ENCODE measurements at regions of chrX and their contacts with region 1.

Region 1: GRCh38 chrX:139554376-139554775 is 23.8 kb downstream of the F9 start:
- DNase-seq: no peak
- ATAC-seq: no peak
- H3K4me3 ChIP-seq: no peak overlapping the region
- H3K27ac ChIP-seq: no peak overlapping the region
- H3K4me1 ChIP-seq: no peaks in the 10 kb centered on the region
- H3K27me3 ChIP-seq: peaks cover 5 to 17% of the 10 kb centered on the region in 2 experiments; a peak in 4 of 5 replicates
- CTCF ChIP-seq: no peak
- EP300 ChIP-seq: no peak
- POLR2A ChIP-seq: no peak
- RAD21 ChIP-seq: no peak

Region 2: GRCh38 chrX:138886769-138887168 is 667.6 kb before region 1 on chrX:
- CTCF ChIA-PET with region 1: no interaction called
- POLR2A ChIA-PET with region 1: no interaction called
- in situ Hi-C with region 1: no loop called
- intact Hi-C with region 1: no loop called
- DNase-seq: no peak
- ATAC-seq: no peak
- H3K4me3 ChIP-seq: no peak overlapping the region
- H3K27ac ChIP-seq: no peak overlapping the region
- H3K4me1 ChIP-seq: no peaks in the 10 kb centered on the region
- H3K27me3 ChIP-seq: no peaks in the 10 kb centered on the region
- CTCF ChIP-seq: no peak
- EP300 ChIP-seq: no peak
- POLR2A ChIP-seq: no peak
- RAD21 ChIP-seq: no peak

Region 3: DNA sequence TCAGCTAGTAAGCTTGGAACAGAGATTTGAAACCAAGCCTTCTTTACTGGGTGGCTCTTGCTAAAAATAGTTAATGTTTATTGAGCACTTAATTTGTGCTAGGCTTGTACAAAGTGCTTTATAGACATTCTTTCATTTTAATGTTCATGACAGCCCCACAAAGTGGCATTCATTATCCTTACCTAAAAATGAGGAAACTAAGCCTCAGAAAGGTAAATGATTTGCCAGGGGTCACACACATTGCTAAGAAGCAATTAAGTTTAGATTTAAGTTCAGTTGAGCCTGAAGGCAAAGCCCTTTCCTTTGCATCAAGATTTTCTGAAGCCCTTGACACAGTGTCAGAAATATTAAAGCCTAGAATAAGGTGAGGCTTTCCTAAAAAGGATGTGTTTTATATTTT is 515.3 kb before region 1 on chrX:
- CTCF ChIA-PET with region 1: no interaction called
- POLR2A ChIA-PET with region 1: no interaction called
- in situ Hi-C with region 1: no loop called
- intact Hi-C with region 1: no loop called
- DNase-seq: no peak
- ATAC-seq: no peak
- H3K4me3 ChIP-seq: no peak overlapping the region
- H3K27ac ChIP-seq: no peak overlapping the region
- H3K4me1 ChIP-seq: no peaks in the 10 kb centered on the region
- H3K27me3 ChIP-seq: no peaks in the 10 kb centered on the region
- CTCF ChIP-seq: no peak
- EP300 ChIP-seq: no peak
- POLR2A ChIP-seq: no peak
- RAD21 ChIP-seq: no peak

Region 4: DNA sequence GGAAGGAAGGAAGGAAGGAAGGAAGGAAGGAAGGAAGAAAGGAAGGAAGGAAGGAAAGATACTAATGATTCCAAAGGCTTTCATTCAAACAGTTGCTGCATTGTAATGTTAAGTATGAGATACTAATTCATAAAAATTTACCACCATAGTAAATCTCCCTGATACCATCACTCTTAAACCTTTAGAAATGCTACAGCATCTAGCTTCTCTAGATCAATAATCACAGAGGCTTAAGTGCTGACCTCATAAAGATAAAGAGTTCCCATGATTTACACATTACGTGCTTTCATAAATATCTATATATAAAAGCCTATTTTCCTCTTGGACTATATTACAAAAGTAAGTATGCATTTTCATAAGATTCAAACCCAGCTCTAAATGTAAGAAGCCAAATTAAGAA is 12.6 kb after region 1 on chrX:
- CTCF ChIA-PET with region 1: no interaction called
- POLR2A ChIA-PET with region 1: interaction called, 11 read pairs
- in situ Hi-C with region 1: no loop called
- intact Hi-C with region 1: no loop called
- DNase-seq: no peak
- ATAC-seq: no peak
- H3K4me3 ChIP-seq: no peak overlapping the region
- H3K27ac ChIP-seq: no peak overlapping the region
- H3K4me1 ChIP-seq: no peaks in the 10 kb centered on the region
- H3K27me3 ChIP-seq: no peaks in the 10 kb centered on the region
- CTCF ChIP-seq: no peak
- EP300 ChIP-seq: no peak
- POLR2A ChIP-seq: no peak
- RAD21 ChIP-seq: no peak

Region 5: DNA sequence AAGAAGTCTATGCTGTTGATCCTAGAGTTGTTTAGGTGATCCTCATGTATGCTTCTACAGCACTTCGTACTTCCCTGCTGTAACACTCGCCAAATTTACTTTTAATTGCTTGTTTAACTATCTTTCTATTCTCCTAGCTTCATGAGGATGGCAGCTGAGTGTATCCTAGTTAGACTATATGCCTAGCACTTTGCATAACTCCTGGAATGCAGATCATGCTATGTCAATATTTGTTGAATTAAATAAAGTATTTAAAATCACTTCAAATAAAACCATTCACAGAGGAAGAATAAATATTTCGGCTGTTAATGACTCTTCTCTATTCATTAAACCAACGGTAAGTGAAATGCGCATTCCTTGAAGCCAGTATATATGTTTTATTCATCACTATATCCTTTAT is 31.2 kb after region 1 on chrX:
- CTCF ChIA-PET with region 1: no interaction called
- POLR2A ChIA-PET with region 1: no interaction called
- in situ Hi-C with region 1: no loop called
- intact Hi-C with region 1: no loop called
- DNase-seq: no peak
- ATAC-seq: no peak
- H3K4me3 ChIP-seq: no peak overlapping the region
- H3K27ac ChIP-seq: no peak overlapping the region
- H3K4me1 ChIP-seq: no peaks in the 10 kb centered on the region
- H3K27me3 ChIP-seq: no peaks in the 10 kb centered on the region
- CTCF ChIP-seq: no peak
- EP300 ChIP-seq: no peak
- POLR2A ChIP-seq: no peak
- RAD21 ChIP-seq: no peak

Region 6: DNA sequence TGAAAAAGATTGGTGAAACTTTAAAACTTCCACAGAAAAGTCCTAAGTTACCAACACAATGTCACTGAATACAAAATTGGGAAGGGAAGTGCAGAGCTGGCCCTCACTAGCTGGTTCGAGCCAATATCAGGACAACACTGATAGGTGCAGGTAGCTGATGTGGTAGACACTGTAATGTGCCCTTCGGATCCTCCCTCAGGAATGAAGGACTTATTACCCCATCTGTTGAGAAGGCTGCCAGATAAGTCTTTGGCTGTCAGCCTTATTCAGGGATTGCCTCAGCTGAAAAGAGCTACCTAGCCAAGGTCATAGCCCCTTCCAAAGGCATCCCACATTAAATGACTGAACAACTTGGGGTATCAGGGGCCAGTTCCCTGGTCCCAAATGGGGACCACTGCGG is 148.3 kb after region 1 on chrX:
- CTCF ChIA-PET with region 1: no interaction called
- POLR2A ChIA-PET with region 1: no interaction called
- in situ Hi-C with region 1: no loop called
- intact Hi-C with region 1: no loop called
- DNase-seq: no peak
- ATAC-seq: no peak
- H3K4me3 ChIP-seq: no peak overlapping the region
- H3K27ac ChIP-seq: no peak overlapping the region
- H3K4me1 ChIP-seq: no peaks in the 10 kb centered on the region
- H3K27me3 ChIP-seq: no peaks in the 10 kb centered on the region
- CTCF ChIP-seq: no peak
- EP300 ChIP-seq: no peak
- POLR2A ChIP-seq: no peak
- RAD21 ChIP-seq: no peak

Measured in K562 (cell line).